ENCODE measurements at regions of chr3 and their contacts with region 1.

Region 1: DNA sequence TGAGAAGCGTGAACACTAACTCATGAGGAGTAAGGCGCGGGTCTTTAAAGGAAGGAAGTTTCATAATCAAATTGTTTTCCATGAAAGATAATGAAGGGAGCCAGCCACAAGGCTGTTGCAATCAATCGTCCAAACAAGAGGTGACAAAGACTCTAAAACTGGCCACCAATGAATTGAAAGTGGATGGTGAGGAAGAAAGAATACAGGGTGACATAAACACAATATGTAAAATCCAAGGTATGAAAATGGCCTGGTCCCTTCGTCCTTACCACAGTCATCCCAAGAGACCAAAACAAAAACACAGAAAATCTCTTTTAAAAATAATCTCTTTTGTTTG is 12.0 kb downstream of the CD86 start:
- DNase-seq: no peak
- ATAC-seq: peak; percentile 66
- H3K4me3 ChIP-seq: peak overlapping the region; percentile 52; the same call in 1 of the 2 replicates
- H3K27ac ChIP-seq: peak overlapping the region; percentile 66
- H3K4me1 ChIP-seq: peaks cover 57% of the 10 kb centered on the region
- H3K27me3 ChIP-seq: no peaks in the 10 kb centered on the region
- CTCF ChIP-seq: no peak
- EP300 ChIP-seq: 0 out of 4 replicates have a peak, but pooled peaks have one; percentile 20 to 29
- POLR2A ChIP-seq: no peak
- RAD21 ChIP-seq: no peak

Region 2: GRCh38 chr3:121941592-121941991 is 125.6 kb before region 1 on chr3:
- CTCF ChIA-PET with region 1: no interaction called
- POLR2A ChIA-PET with region 1: no interaction called
- RAD21 ChIA-PET with region 1: no interaction called
- SMC1A ChIA-PET with region 1: no interaction called
- in situ Hi-C with region 1: no loop called
- intact Hi-C with region 1: no loop called
- DNase-seq: no peak
- ATAC-seq: no peak
- H3K4me3 ChIP-seq: no peak overlapping the region
- H3K27ac ChIP-seq: no peak overlapping the region
- H3K4me1 ChIP-seq: no peaks in the 10 kb centered on the region
- H3K27me3 ChIP-seq: no peaks in the 10 kb centered on the region
- CTCF ChIP-seq: no peak
- EP300 ChIP-seq: no peak
- POLR2A ChIP-seq: no peak
- RAD21 ChIP-seq: no peak

Region 3: GRCh38 chr3:121989943-121990342 is 77.2 kb before region 1 on chr3:
- CTCF ChIA-PET with region 1: interaction called, 32 read pairs
- POLR2A ChIA-PET with region 1: no interaction called
- RAD21 ChIA-PET with region 1: interaction called, 16 read pairs
- SMC1A ChIA-PET with region 1: interaction called, 67 read pairs
- in situ Hi-C with region 1: no loop called
- intact Hi-C with region 1: no loop called
- DNase-seq: no peak
- ATAC-seq: no peak
- H3K4me3 ChIP-seq: no peak overlapping the region
- H3K27ac ChIP-seq: no peak overlapping the region
- H3K4me1 ChIP-seq: peaks cover 24% of the 10 kb centered on the region
- H3K27me3 ChIP-seq: no peaks in the 10 kb centered on the region
- CTCF ChIP-seq: peak in 2 of 3 experiments; percentile 12 to 21; a peak in 3 of 6 replicates
- EP300 ChIP-seq: no peak
- POLR2A ChIP-seq: no peak
- RAD21 ChIP-seq: peak; percentile 52

Region 4: DNA sequence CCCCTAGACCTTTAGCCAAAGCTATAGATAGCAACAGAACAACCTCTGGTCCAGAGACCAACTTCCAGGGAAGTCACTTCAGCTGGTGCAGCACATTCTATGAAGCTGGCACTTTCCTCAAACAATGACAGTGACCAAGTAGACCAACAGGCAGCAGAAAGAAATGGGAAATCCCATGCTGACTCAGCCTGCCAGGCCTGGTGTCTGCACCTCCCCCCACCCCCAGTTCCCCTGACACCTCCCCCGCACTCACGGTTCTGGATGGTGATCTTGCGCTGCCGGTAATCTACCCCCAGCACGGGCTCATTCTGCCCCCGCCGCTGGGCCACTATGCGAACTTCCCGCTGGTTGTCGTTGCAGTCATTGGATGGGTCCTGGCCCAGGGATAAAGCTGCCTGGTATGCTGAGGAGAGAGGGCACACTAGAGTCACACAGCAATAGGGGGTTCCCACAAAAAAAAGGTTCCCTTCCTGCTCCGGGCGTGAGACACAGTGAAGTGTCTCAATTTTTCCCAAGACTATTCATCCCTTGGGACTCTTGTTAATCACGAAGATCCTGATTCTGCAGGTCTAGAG is 62.1 kb before region 1 on chr3:
- CTCF ChIA-PET with region 1: interaction called, 14 read pairs
- POLR2A ChIA-PET with region 1: interaction called, 8 read pairs
- RAD21 ChIA-PET with region 1: interaction called, 47 read pairs
- SMC1A ChIA-PET with region 1: interaction called, 54 read pairs
- in situ Hi-C with region 1: no loop called
- intact Hi-C with region 1: no loop called
- DNase-seq: peak; percentile 74
- ATAC-seq: peak; percentile 78
- H3K4me3 ChIP-seq: peak overlapping the region; percentile 46; the same call in 1 of the 2 replicates
- H3K27ac ChIP-seq: peak overlapping the region; percentile 91
- H3K4me1 ChIP-seq: peaks cover 58% of the 10 kb centered on the region
- H3K27me3 ChIP-seq: no peaks in the 10 kb centered on the region
- CTCF ChIP-seq: 0 out of 6 replicates have a peak, but pooled peaks of 1 of the 3 experiments have one; percentile 3
- EP300 ChIP-seq: peak; percentile 11 to 65; a peak in 3 of 4 replicates
- POLR2A ChIP-seq: 0 out of 2 replicates have a peak, but pooled peaks have one; percentile 35
- RAD21 ChIP-seq: no peak

Region 5: DNA sequence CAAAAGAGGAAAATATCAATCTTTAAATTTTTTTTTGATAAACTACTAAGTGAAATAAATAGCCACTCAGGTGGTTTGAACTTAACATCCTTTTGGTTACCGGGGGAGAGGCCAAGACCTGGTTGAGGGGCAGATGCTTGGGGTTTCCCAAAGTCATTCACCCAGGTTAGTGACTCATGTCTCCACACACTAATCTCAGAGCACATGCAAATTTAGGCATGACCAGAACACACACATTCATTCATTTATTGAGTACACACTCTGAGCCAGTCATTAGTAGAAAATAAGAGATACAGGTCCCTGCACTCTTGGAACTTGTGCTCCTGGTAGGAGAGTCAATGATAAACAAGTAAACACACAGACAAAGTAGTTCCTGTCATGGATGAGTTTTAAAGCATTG is 52.4 kb before region 1 on chr3:
- CTCF ChIA-PET with region 1: interaction called, 19 read pairs
- POLR2A ChIA-PET with region 1: interaction called, 30 read pairs
- RAD21 ChIA-PET with region 1: interaction called, 76 read pairs
- SMC1A ChIA-PET with region 1: interaction called, 58 read pairs
- in situ Hi-C with region 1: no loop called
- intact Hi-C with region 1: no loop called
- DNase-seq: peak; percentile 91
- ATAC-seq: peak; percentile 80
- H3K4me3 ChIP-seq: peak overlapping the region; percentile 18; the same call in 1 of the 2 replicates
- H3K27ac ChIP-seq: peak overlapping the region; percentile 60
- H3K4me1 ChIP-seq: peaks cover 72% of the 10 kb centered on the region
- H3K27me3 ChIP-seq: no peaks in the 10 kb centered on the region
- CTCF ChIP-seq: no peak
- EP300 ChIP-seq: peak; percentile 81 to 86; a peak in 3 of 4 replicates
- POLR2A ChIP-seq: no peak
- RAD21 ChIP-seq: no peak

Region 6: DNA sequence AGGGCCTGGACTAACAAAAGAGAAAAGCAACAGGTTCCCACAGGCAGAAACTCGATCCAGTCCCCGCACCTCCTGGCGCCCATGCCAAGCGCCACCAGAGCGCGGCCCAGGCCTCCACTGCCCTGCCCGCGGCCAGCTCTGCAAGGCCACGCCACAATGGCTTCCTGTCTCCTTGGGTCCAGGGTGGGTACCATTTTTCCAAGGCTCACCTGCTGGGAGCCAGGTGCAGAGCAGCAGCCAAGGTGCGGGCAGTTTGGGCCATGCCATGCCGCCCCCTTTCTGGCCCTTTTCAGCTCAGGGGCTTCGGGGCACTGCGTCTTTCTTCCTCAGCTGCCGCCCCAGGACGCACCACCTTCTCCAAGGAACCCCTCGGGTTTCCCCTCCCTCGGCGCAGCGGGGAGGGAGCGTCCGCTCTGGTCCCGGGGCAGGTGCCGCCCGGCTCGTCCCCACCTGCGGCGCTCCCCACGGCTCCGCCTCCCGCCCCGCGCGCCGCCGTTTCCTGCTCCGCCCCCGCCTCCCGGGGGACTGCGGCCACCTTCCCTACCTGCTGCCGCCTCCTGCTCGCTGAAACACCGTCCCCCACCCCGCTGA is 45.3 kb before region 1 on chr3 and contains the start of gene ILDR1:
- CTCF ChIA-PET with region 1: interaction called, 19 read pairs
- POLR2A ChIA-PET with region 1: interaction called, 38 read pairs
- RAD21 ChIA-PET with region 1: interaction called, 76 read pairs
- SMC1A ChIA-PET with region 1: interaction called, 58 read pairs
- in situ Hi-C with region 1: no loop called
- intact Hi-C with region 1: no loop called
- DNase-seq: no peak
- ATAC-seq: peak; percentile 55
- H3K4me3 ChIP-seq: peak within 1 kb of the TSS; percentile 72
- H3K27ac ChIP-seq: peak within 1 kb of the TSS; percentile 65
- H3K4me1 ChIP-seq: peaks cover 49% of the 10 kb centered on the region
- H3K27me3 ChIP-seq: no peaks in the 10 kb centered on the region
- CTCF ChIP-seq: no peak
- EP300 ChIP-seq: no peak
- POLR2A ChIP-seq: peak; percentile 60; the same call in 1 of the 2 replicates
- RAD21 ChIP-seq: no peak
- polyA plus RNA-seq, gene ILDR1: 1.3 to 1.8 TPM

Region 7: GRCh38 chr3:122030381-122031122 is 36.6 kb before region 1 on chr3:
- CTCF ChIA-PET with region 1: interaction called, 11 read pairs
- POLR2A ChIA-PET with region 1: interaction called, 38 read pairs
- RAD21 ChIA-PET with region 1: interaction called, 51 read pairs
- SMC1A ChIA-PET with region 1: interaction called, 52 read pairs
- in situ Hi-C with region 1: no loop called
- intact Hi-C with region 1: no loop called
- DNase-seq: peak; percentile 74
- ATAC-seq: peak; percentile 86
- H3K4me3 ChIP-seq: peak overlapping the region; percentile 41; the same call in 1 of the 2 replicates
- H3K27ac ChIP-seq: peak overlapping the region; percentile 89
- H3K4me1 ChIP-seq: peaks cover 37% of the 10 kb centered on the region
- H3K27me3 ChIP-seq: no peaks in the 10 kb centered on the region
- CTCF ChIP-seq: no peak
- EP300 ChIP-seq: no peak
- POLR2A ChIP-seq: 0 out of 2 replicates have a peak, but pooled peaks have one; percentile 25
- RAD21 ChIP-seq: peak; percentile 11; the same call in 1 of the 2 replicates